ENCODE measurements at regions of chr21 and their contacts with region 1.

Region 1: DNA sequence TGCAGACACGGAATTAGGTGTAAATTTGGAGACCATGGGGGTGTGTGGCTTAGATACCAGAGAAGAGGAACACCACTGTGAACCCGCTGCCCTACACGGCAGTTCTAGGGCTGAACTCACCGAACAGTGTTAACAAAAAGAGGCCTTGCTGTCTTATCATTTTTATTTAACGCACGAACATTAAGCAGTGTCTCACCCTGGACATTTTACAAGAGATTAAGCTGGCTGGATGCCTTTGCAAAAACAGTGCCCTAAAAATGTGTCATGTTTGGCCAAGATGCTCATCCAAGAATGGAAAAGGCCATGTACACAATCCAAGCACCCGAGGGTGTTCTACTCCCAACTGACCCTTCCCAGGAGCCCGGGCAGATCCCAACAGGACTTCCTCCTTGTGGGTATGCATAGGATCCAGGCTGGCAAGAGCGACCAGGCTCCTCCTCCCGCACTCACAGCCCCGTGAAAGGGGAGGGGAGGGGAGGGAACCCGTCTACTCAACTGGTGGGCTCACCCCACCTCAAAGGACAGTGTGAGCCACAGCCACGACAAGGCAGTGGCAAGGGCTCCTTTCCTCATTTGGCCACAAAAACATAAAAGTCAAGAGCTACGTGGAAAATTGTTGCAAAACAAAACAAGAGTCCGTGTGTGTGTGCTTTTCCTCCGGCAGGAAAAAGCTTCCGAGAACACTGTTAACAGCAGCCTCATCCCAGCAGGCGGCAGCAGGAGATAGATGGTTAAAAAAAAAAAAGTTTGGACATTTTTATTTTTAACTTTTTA is 20.3 kb downstream of the C2CD2 start:
- DNase-seq: peak; percentile 54
- H3K4me3 ChIP-seq: peak overlapping the region; percentile 29 to 43 (median 42)
- H3K27ac ChIP-seq: peak overlapping the region; percentile 89
- H3K4me1 ChIP-seq: peaks cover 54% of the 10 kb centered on the region
- H3K27me3 ChIP-seq: no peaks in the 10 kb centered on the region
- CTCF ChIP-seq: peak; percentile 45 to 66

Region 2: DNA sequence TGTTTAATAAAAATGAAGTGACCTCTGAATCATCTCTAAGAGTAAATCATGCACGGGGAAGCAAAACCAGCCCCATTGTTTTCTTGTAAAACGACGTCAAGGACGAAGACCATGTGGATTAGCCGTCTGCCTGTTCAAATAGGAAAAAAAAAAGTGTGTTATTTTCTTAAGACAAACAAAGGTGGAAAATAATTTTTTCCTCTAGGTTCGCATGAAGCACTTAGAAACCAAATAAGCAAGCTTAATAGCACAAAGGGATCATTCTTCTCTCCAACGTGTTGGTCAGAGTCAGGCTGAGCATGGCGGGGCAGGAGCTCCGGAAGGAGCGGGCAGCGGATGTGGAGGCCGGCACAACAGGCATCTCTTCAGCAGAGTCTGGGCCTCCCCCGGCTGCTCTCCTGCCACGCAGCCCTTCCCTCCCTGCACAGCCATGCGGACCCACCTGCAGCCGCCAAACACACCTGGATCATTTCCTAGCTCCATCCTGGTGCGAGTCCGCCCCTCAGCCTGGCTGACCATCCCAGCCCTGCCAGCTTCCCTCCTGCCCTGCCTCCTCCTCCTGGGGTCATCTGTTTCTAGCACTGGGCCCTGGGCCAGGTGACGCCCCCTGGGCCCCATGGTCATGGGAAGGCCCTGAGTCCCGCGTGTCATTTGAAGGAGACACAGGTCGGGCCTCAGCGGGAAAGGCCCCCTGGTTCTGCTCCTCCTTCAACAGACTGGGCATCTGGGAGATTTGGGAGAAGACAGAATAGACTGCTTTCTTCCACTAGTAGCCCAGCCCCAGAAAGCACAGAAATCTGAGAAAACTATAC is 467.3 kb before region 1 on chr21:
- CTCF ChIA-PET with region 1: no interaction called
- dilution Hi-C with region 1: no loop called
- in situ Hi-C with region 1: no loop called
- intact Hi-C with region 1: loop called (anchors 5 kb)
- DNase-seq: no peak
- H3K4me3 ChIP-seq: no peak overlapping the region
- H3K27ac ChIP-seq: no peak overlapping the region
- H3K4me1 ChIP-seq: no peaks in the 10 kb centered on the region
- H3K27me3 ChIP-seq: no peaks in the 10 kb centered on the region
- CTCF ChIP-seq: no peak

Region 3: DNA sequence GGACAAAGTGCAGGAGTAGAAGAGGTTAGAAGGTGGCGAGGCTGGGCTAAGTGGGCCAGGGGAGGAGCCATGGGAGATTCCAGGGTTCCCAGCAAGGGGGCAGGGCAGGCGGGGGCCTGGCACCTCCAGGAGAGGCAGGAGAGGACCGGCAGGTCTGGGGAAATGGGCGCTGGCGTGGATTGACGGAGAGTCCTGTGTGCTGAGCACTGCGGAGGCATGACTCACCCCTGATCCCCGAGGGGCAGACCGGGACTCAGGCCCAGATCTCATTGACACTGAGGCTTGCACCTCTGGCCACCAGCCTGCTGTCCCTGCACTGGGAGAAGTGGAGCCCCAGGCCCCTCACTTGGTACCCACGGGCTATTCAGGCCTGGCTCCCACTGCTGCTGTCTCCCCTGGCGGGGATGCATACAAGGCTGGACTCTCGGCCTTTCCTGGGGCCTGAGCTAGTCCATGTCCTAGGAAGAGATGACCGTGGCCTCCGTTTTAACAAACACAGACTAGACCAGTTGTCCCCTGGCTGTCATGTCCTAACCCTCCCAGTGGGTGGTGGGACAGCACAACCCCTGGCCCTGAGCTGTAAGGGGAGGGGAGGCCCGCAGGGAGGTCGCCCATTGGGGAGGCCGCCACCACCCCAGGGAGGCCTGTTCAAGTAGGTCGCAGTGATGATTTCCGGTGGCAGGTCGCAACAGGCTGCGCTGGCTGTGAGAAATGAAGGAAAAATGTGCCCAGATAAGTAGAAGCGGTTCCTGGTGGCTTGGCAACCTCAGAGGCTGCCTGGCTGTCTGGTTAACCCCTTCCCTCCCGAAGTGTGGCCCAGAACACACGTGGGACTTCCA is 206.3 kb before region 1 on chr21:
- CTCF ChIA-PET with region 1: no interaction called
- dilution Hi-C with region 1: no loop called
- in situ Hi-C with region 1: no loop called
- intact Hi-C with region 1: loop called (anchors 1 kb)
- DNase-seq: peak; percentile 93
- H3K4me3 ChIP-seq: peak overlapping the region in 1 of 3 experiments; percentile 28
- H3K27ac ChIP-seq: peak overlapping the region; percentile 84
- H3K4me1 ChIP-seq: peaks cover 56% of the 10 kb centered on the region
- H3K27me3 ChIP-seq: no peaks in the 10 kb centered on the region
- CTCF ChIP-seq: no peak

Region 4: DNA sequence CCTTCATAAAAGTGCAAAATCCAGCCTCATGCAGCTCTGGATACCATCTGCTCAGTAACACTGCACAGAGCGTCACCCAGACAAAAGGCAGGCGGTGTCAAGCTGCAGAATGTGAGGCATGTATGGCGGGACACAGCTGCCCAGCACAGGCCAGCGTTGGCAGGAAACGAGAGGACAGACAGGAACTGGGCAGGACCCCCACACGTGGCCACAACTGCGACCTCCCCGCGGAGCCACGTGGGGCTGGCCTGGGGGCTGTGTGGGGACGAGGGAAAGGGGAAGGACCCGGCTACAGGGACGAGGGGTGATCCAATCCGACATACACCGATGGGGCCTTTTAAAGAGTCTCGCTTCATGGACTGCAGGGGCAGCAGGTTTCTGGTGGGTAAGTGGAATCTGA is 189.0 kb before region 1 on chr21:
- CTCF ChIA-PET with region 1: no interaction called
- dilution Hi-C with region 1: no loop called
- in situ Hi-C with region 1: no loop called
- intact Hi-C with region 1: no loop called
- DNase-seq: no peak
- H3K4me3 ChIP-seq: no peak overlapping the region
- H3K27ac ChIP-seq: no peak overlapping the region
- H3K4me1 ChIP-seq: peaks cover under 1% of the 10 kb centered on the region
- H3K27me3 ChIP-seq: no peaks in the 10 kb centered on the region
- CTCF ChIP-seq: no peak

Region 5: GRCh38 chr21:41816220-41817165 is 117.0 kb before region 1 on chr21:
- CTCF ChIA-PET with region 1: interaction called, 11 read pairs
- dilution Hi-C with region 1: no loop called
- in situ Hi-C with region 1: no loop called
- intact Hi-C with region 1: loop called (anchors 1 kb)
- DNase-seq: peak; percentile 38
- H3K4me3 ChIP-seq: no peak overlapping the region
- H3K27ac ChIP-seq: no peak overlapping the region
- H3K4me1 ChIP-seq: peaks cover 6% of the 10 kb centered on the region
- H3K27me3 ChIP-seq: no peaks in the 10 kb centered on the region
- CTCF ChIP-seq: peak; percentile 60 to 62

Region 6: GRCh38 chr21:42009831-42010523 is 76.5 kb after region 1 on chr21 and contains the start of gene ZBTB21:
- CTCF ChIA-PET with region 1: no interaction called
- dilution Hi-C with region 1: loop called (anchors 5 kb)
- in situ Hi-C with region 1: no loop called
- intact Hi-C with region 1: loop called (anchors 1 kb)
- DNase-seq: peak; percentile 95
- H3K4me3 ChIP-seq: peak within 1 kb of the TSS; percentile 79 to 83 (median 80)
- H3K27ac ChIP-seq: peak within 1 kb of the TSS; percentile 95
- H3K4me1 ChIP-seq: peaks cover 5% of the 10 kb centered on the region
- H3K27me3 ChIP-seq: no peaks in the 10 kb centered on the region
- CTCF ChIP-seq: no peak
- total RNA-seq, gene ZBTB21: 16.3 to 22.4 TPM

Region 7: DNA sequence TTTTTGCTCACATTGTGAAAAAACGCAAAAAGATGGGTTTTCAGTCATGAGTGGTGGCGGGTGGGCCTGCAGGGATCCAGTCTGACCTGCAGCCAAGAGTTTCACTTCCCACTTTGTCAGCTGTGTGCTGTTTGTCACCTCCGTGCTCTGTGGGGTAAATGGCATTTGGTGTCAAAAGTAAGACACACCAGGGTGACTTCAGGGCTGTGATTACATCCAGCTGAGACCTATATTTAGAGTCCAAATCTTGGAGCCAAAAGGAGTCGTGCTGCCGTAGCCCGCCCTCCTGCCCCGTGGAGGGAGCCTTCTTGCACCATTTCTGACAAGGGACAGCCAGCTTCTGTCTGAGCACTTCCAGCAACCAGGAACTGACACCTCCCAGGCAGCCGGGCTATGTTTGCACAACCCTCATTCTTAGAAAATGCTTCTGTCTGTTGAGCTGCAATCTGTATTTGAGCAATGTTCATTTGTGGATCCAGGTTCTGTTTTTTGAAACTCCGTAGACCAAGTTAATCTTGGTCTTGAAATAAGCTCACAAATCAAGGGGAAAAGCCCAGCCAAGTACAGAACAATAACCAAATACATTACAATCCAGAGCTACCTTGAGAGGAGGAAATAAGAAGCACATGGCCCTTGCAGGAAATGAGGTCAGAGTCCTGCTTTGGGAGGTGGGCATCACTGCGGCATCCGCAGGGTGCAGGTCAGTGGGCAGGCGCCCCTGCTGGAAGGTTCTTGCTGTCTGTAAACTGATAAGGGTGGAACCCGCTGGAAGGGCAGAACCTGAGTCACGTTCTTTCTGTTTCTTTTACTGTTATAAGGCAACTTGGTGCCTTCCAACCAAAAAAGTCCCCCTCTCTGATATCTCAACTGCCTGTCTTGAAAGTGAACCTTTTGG is 299.8 kb after region 1 on chr21:
- CTCF ChIA-PET with region 1: no interaction called
- dilution Hi-C with region 1: no loop called
- in situ Hi-C with region 1: no loop called
- intact Hi-C with region 1: no loop called
- DNase-seq: no peak
- H3K4me3 ChIP-seq: no peak overlapping the region
- H3K27ac ChIP-seq: no peak overlapping the region
- H3K4me1 ChIP-seq: peaks cover 25% of the 10 kb centered on the region
- H3K27me3 ChIP-seq: no peaks in the 10 kb centered on the region
- CTCF ChIP-seq: peak in 1 of 2 donors; percentile 12

Region 8: DNA sequence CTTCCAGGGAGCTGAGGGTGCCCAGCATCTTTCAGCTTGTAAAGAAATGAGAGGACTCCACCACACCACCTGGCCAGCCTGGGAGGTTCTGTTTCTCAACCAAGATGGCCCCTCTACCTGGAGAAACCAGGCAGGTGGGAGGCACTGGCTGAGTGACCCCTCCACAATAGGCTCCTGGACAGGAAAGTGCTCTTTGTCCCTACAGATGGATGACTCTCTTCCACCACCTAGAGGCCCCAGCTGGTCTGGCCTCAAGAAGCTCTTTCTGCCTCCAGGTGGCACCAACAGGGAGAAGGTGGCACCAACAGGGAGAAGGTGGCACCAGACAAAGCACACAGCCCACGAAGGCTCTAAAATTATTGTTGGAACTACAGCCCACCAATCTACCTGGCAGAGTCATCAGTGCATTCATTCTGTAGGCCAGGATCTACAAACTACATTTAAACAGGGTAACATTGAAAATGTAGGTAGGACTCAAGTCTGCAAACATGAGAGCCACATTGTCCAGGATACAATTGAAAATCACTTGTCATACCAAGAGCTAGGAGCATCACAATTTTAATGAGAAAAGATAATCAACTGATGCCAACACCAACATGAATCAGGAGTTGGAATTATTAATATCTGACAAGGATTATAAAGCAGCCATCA is 448.0 kb after region 1 on chr21:
- CTCF ChIA-PET with region 1: no interaction called
- dilution Hi-C with region 1: no loop called
- in situ Hi-C with region 1: no loop called
- intact Hi-C with region 1: loop called (anchors 5 kb)
- DNase-seq: peak; percentile 48
- H3K4me3 ChIP-seq: no peak overlapping the region
- H3K27ac ChIP-seq: no peak overlapping the region
- H3K4me1 ChIP-seq: no peaks in the 10 kb centered on the region
- H3K27me3 ChIP-seq: no peaks in the 10 kb centered on the region
- CTCF ChIP-seq: peak; percentile 72 to 94

Measured in mammary epithelial cell (primary cell).